ENCODE measurements at regions of chr3 and their contacts with region 1.

Region 1: GRCh38 chr3:16370872-16371740 is 106.1 kb downstream of the OXNAD1 start:
- DNase-seq: peak in 2 of 5 donors; percentile 45 to 57
- ATAC-seq: peak; percentile 17 to 53 (median 48)
- H3K4me3 ChIP-seq: no peak overlapping the region
- H3K27ac ChIP-seq: peak overlapping the region in 11 of 12 donors; percentile 50 to 78 (median 70)
- H3K4me1 ChIP-seq: peaks cover 27 to 91% (median 67%) of the 10 kb centered on the region in 12 donors
- H3K27me3 ChIP-seq: no peaks in the 10 kb centered on the region
- CTCF ChIP-seq: no peak
- POLR2A ChIP-seq: no peak

Region 2: DNA sequence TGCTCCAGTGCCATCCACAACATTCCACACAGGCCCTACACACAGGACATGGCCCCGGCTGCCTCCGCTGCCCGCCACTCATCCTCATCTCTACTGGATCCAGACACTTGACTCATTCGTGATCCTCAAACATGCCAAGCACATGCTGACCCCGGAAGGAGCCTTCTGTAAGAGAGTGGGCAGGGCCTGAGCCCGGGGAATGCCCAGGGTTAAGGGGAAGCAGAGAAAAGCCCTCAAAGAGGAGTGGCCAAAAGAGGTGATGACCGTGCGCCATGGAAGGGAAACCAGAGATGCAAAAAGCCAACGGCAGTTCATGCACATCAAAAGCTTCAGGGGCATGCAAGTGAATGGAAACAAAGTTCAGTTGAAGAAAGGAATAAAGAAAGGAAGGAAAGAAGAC is 96.3 kb after region 1 on chr3:
- intact Hi-C with region 1: loop called in 1 of 10 experiments (anchors 5 kb)
- DNase-seq: no peak
- ATAC-seq: no peak
- H3K4me3 ChIP-seq: no peak overlapping the region
- H3K27ac ChIP-seq: peak overlapping the region in 8 of 12 donors; percentile 5 to 70 (median 46)
- H3K4me1 ChIP-seq: peaks cover 0 to 62% (median 45%) of the 10 kb centered on the region in 12 donors
- H3K27me3 ChIP-seq: no peaks in the 10 kb centered on the region
- CTCF ChIP-seq: no peak
- POLR2A ChIP-seq: no peak

Region 3: DNA sequence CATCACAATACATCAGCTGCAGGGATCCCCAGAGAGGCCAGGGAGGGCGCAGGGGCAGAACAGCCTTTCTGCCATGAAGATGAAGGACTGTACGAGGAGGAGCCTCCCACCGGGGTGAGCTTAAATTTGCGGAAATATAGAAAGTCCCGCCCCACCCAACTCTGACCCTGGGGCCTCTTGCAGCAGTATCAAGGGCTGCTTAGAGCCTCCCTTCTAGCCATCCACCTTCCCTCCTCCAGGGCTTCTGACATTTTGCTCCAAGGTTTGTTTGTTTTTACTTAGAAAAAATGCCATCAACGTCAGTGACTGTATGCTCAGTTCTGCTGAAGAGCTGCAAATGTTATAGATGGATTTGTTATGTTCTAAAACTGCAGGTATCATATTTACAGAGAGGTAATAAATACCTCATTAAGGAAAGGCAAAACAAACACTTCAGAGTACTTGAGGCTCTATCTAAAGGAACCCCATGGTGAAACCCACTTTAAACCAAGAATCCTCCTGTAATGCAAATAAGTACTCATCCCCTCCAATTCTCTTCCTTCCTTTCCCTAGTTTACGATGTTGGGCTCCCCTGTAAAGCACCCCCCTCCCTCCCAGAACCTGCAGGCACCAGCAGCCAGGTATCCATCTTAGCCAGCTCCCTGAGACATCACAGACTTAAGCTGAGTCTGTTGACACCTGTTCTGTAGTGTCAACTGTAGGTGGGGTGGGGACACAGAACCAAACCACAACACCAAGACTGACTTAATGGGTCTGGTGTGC is 111.8 kb after region 1 on chr3:
- intact Hi-C with region 1: loop called in 1 of 10 experiments (anchors 5 kb)
- DNase-seq: peak in 1 of 5 donors; percentile 44
- ATAC-seq: peak in 2 of 4 donors; percentile 50 to 64
- H3K4me3 ChIP-seq: no peak overlapping the region
- H3K27ac ChIP-seq: peak overlapping the region in 5 of 12 donors; percentile 4 to 82 (median 18)
- H3K4me1 ChIP-seq: peaks cover 0 to 68% (median 36%) of the 10 kb centered on the region in 12 donors
- H3K27me3 ChIP-seq: no peaks in the 10 kb centered on the region
- CTCF ChIP-seq: no peak
- POLR2A ChIP-seq: no peak